CD8-positive, alpha-beta T cell (primary cell): ENCODE measurements at regions of chrX and their contacts with region 1.

Region 1: DNA sequence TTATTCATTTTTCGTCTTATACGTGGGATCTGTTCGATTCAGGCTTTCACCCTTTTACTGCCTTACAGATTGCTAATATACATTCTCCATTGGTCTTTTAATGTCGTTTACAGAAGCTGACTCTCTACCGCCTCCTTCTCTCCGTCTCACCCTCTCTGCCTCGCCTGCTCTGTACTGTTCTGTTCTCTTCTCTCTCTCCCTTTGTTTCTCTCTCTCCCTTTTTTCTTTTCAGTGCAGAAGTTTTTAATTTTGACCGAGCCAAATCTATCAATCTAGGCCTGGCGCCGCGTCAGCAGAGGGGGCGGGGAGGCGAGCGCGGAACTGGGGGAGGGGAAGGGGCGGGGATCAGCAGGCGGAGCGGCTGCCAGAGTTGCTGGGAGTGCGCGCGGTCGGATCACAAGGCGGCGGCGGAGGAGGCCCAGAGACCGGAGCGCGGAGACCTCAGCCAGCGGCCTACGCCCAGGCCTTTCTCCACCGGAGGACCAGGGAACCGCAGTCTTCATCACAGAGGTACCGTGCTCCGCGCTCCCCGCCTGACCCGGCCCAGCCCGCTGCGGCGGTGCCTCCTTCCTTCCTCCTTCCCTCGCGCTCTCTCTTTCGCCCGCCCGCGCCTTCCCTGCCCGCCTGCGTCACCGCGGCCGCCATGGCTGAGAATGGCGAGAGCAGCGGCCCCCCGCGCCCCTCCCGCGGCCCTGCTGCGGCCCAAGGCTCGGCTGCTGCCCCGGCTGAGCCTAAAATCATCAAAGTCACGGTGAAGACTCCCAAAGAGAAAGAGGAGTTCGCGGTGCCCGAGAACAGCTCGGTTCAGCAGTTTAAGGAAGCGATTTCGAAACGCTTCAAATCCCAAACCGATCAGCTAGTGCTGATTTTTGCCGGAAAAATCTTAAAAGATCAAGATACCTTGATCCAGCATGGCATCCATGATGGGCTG is at the start of gene UBQLN2:
- DNase-seq: peak; percentile 51 to 88 (median 77)
- ATAC-seq: peak; percentile 78
- H3K4me3 ChIP-seq: peak within 1 kb of the TSS; percentile 77 to 83
- H3K4me3 Mint-ChIP-seq: peak within 1 kb of the TSS; percentile 94
- H3K27ac ChIP-seq: peak within 1 kb of the TSS; percentile 93 to 94
- H3K27ac Mint-ChIP-seq: peak within 1 kb of the TSS; percentile 99
- H3K4me1 ChIP-seq: no peaks in the 10 kb centered on the region
- H3K4me1 Mint-ChIP-seq: peaks cover 22% of the 10 kb centered on the region
- H3K27me3 ChIP-seq: no peaks in the 10 kb centered on the region
- H3K27me3 Mint-ChIP-seq: no peaks in the 10 kb centered on the region
- CTCF ChIP-seq: no peak
- total RNA-seq, gene UBQLN2: 34.3 to 35.6 TPM

Region 2: GRCh38 chrX:55451990-55452832 is 1111.3 kb before region 1 on chrX and contains the start of gene MAGEH1:
- CTCF ChIA-PET with region 1: no interaction called
- POLR2A ChIA-PET with region 1: no interaction called
- intact Hi-C with region 1: loop called in 1 of 2 experiments (anchors 10 kb)
- DNase-seq: peak; percentile 55 to 92 (median 78)
- ATAC-seq: peak; percentile 91
- H3K4me3 ChIP-seq: peak within 1 kb of the TSS; percentile 76 to 86
- H3K4me3 Mint-ChIP-seq: peak within 1 kb of the TSS; percentile 93
- H3K27ac ChIP-seq: peak within 1 kb of the TSS; percentile 81 to 83
- H3K27ac Mint-ChIP-seq: peak within 1 kb of the TSS; percentile 97
- H3K4me1 ChIP-seq: peaks cover 12% of the 10 kb centered on the region
- H3K4me1 Mint-ChIP-seq: peaks cover 20% of the 10 kb centered on the region
- H3K27me3 ChIP-seq: no peaks in the 10 kb centered on the region
- H3K27me3 Mint-ChIP-seq: no peaks in the 10 kb centered on the region
- CTCF ChIP-seq: no peak
- total RNA-seq, gene MAGEH1: 13.0 to 14.7 TPM

Region 3: DNA sequence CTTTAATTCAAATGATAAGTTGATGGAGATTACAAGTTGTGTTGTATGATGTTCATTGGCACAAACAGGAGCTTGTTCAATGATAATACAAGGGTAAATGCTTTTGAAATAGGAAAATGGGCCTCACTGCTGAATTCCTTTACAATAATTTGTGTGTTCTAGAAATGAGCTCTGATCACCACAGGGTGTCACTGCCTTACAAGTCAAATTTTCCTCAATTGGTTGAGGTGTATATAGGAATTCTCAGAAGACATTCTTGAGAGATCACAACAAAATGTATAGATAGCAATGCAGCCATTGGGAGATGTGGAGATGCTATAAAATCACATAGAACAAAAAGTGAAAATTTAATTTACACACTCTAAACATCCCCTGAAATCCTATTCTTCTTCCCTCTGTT is 281.7 kb before region 1 on chrX:
- CTCF ChIA-PET with region 1: interaction called, 3 read pairs
- POLR2A ChIA-PET with region 1: no interaction called
- intact Hi-C with region 1: loop called (anchors 1 to 5 kb)
- DNase-seq: peak in 4 of 9 experiments; percentile 6 to 68 (median 30)
- ATAC-seq: no peak
- H3K4me3 ChIP-seq: no peak overlapping the region
- H3K4me3 Mint-ChIP-seq: no peak overlapping the region
- H3K27ac ChIP-seq: no peak overlapping the region
- H3K27ac Mint-ChIP-seq: no peak overlapping the region
- H3K4me1 ChIP-seq: peaks cover 6% of the 10 kb centered on the region
- H3K4me1 Mint-ChIP-seq: peaks cover 8% of the 10 kb centered on the region
- H3K27me3 ChIP-seq: no peaks in the 10 kb centered on the region
- H3K27me3 Mint-ChIP-seq: no peaks in the 10 kb centered on the region
- CTCF ChIP-seq: peak; percentile 43

Region 4: GRCh38 chrX:56503941-56504662 is 59.4 kb before region 1 on chrX:
- CTCF ChIA-PET with region 1: no interaction called
- POLR2A ChIA-PET with region 1: no interaction called
- intact Hi-C with region 1: loop called in 1 of 2 experiments (anchors 10 kb)
- DNase-seq: no peak
- ATAC-seq: no peak
- H3K4me3 ChIP-seq: no peak overlapping the region
- H3K4me3 Mint-ChIP-seq: no peak overlapping the region
- H3K27ac ChIP-seq: no peak overlapping the region
- H3K27ac Mint-ChIP-seq: no peak overlapping the region
- H3K4me1 ChIP-seq: no peaks in the 10 kb centered on the region
- H3K4me1 Mint-ChIP-seq: no peaks in the 10 kb centered on the region
- H3K27me3 ChIP-seq: no peaks in the 10 kb centered on the region
- H3K27me3 Mint-ChIP-seq: no peaks in the 10 kb centered on the region
- CTCF ChIP-seq: no peak

Region 5: DNA sequence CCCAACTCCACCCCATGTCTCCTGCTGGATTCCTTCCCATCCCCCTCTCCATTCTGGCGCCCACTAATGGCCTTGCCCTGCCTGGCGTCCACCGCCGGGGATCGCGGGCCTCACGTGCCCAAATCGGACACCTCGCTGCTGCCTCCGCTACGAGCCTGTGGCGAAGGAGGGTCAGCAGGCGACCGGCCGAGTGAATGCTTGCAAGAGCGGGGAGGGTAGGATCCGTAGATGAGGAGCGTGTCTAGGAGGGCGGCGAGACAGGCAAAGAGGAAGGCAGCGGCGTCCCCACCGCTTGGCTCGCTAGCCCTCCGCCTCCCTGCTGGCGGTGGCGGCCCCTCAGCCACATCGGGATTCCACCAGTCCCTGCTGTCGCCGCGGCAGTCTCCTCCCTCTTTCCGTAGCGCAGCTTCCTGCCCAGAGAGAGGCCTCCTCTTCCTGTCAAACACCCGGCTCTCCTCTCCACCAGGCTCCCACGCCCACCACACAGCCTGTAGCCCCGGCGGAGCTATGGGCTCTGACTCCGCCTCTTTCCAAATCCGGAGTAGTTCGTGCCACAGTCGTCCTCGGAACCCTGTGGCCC is 557.8 kb after region 1 on chrX and contains the start of gene SPIN2B:
- CTCF ChIA-PET with region 1: no interaction called
- POLR2A ChIA-PET with region 1: no interaction called
- intact Hi-C with region 1: loop called in 1 of 2 experiments (anchors 10 kb)
- DNase-seq: peak; percentile 43 to 89 (median 75)
- ATAC-seq: peak; percentile 99
- H3K4me3 ChIP-seq: peak within 1 kb of the TSS; percentile 60 to 77
- H3K4me3 Mint-ChIP-seq: peak within 1 kb of the TSS; percentile 94
- H3K27ac ChIP-seq: peak within 1 kb of the TSS; percentile 40 to 53
- H3K27ac Mint-ChIP-seq: peak within 1 kb of the TSS; percentile 89
- H3K4me1 ChIP-seq: peaks cover 4% of the 10 kb centered on the region
- H3K4me1 Mint-ChIP-seq: peaks cover 13% of the 10 kb centered on the region
- H3K27me3 ChIP-seq: no peaks in the 10 kb centered on the region
- H3K27me3 Mint-ChIP-seq: no peaks in the 10 kb centered on the region
- CTCF ChIP-seq: no peak
- total RNA-seq, gene SPIN2B: 8.1 to 8.6 TPM

Region 6: DNA sequence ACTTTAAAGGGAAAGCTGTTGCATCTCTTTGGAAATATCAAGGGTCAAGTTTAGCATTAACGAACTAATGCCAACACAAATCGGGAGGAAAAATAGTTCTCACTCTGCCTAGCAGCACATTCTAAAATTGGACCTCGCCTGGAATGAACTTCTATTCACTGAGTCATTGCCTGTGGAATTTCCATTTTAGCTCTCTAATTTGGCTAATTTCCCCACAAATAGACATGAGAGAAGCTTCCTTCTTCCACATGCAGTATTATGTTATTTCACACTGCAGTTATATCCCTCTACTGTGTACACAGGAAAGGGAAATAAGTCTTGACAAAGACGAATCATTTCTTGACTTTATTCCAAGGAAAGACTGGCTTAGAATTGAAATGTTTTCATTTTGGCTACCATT is 1337.5 kb after region 1 on chrX:
- CTCF ChIA-PET with region 1: no interaction called
- POLR2A ChIA-PET with region 1: no interaction called
- intact Hi-C with region 1: loop called in 1 of 2 experiments (anchors 10 kb)
- DNase-seq: no peak
- ATAC-seq: no peak
- H3K4me3 ChIP-seq: no peak overlapping the region
- H3K4me3 Mint-ChIP-seq: no peak overlapping the region
- H3K27ac ChIP-seq: no peak overlapping the region
- H3K27ac Mint-ChIP-seq: no peak overlapping the region
- H3K4me1 ChIP-seq: no peaks in the 10 kb centered on the region
- H3K4me1 Mint-ChIP-seq: peaks cover 11% of the 10 kb centered on the region
- H3K27me3 ChIP-seq: no peaks in the 10 kb centered on the region
- H3K27me3 Mint-ChIP-seq: no peaks in the 10 kb centered on the region
- CTCF ChIP-seq: no peak